Posterior cingulate gyrus (tissue), 11 donors: ENCODE measurements at regions of chr10 and their contacts with region 1.

Region 1: DNA sequence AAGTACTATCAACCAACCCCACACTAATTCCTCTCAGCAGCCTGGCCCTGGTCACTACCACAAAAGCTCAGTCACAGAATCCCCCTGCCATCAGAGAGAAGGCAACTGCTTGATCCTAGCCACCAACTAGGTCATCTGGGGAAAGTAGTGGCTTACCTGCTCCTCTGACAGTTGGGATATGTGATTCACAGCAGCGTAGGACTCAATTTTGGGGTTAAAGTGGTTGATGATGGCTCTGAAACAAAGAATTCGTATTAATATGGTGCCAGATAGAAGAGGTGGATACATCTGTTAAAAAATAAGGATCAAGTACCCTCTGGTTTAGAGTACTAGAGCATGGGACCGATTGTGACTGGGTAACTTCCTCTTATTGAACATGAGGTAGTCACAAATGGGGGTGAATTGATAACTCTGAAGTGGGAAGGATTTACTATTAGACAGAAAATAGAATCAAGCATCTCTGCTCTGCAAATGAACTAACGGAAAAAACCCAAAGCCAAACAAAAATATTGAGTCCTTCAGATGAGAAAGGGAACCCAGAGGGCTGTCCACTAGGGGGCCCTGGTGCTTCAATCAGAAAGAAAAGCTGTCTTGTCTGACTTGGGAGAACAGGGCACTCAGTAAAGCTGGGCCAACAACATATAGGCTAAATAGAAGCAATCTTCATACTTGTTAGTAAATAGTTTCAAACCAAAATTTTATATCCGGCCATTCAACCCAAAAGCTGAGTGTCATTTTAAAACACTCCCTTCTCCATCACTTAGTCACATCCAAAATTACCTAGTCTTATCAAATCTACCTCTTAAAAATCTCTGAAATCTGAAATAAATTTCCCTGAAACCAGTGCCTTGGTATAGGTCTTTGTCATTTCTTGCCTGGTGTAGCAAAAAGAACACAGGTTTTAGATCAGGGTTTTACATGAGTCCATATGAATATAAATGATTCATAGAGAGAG is 45.9 kb upstream of the KCNIP2 start:
- DNase-seq: peak; percentile 62 to 96 (median 86)

Region 2: GRCh38 chr10:102009801-102010425 is 120.4 kb after region 1 on chr10:
- intact Hi-C with region 1: loop called (anchors 1 kb)
- DNase-seq: peak in 4 of 10 donors; percentile 12 to 45 (median 30)

Region 3: DNA sequence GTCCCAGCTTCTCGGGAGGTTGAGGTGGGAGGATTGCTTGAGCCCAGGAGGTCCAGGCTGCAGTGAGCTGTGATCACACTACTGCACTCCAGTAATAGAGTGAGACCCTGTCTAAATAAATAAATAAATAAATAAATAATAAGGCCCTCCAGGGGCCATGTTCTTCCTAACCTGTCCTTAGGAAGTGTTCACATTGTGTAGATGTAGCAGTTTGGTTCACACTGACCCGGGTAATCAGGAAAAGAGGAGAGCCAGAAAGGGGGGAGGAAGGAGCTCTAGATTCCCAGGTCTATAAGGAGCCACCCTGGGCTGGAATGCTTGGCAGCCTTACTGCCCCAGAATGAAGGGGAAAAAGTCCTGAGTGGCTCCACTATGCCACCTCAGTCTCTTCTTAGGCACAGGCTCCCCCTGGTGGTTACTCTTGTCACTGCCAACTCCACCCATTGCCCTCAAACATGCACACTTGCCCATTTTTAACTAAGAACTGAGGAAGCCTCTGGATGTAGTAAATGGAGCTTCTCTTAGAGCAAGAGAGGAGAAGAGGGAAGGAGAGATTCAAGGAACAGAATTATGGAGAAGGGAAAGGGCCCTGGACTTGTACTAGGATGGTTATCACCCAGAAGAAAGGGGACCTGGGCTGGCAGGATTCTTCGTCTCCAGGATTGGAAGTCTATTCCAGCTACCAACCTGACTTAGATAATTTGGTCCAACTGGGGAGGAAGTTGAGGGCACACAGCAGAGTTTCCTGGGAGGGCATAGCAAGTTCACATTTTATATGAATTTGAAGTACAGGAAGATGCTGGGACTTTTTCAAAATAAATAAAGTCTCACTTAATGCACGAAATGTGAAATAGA is 183.4 kb after region 1 on chr10:
- intact Hi-C with region 1: loop called (anchors 5 kb)
- DNase-seq: peak; percentile 55 to 95 (median 86)